H1 (cell line): ENCODE measurements at regions of chr9 and their contacts with region 1.

Region 1: GRCh38 chr9:96317335-96317980 is 15.5 kb upstream of the HSD17B3 start:
- DNase-seq: peak in 1 of 2 experiments; percentile 66
- H3K4me3 ChIP-seq: no peak overlapping the region
- H3K27ac ChIP-seq: no peak overlapping the region
- H3K4me1 ChIP-seq: peaks cover 0 to 10% (median 6%) of the 10 kb centered on the region in 4 experiments; a peak in 4 of 7 replicates
- H3K27me3 ChIP-seq: no peaks in the 10 kb centered on the region
- CTCF ChIP-seq: peak; percentile 58 to 90 (median 69)
- EP300 ChIP-seq: no peak
- POLR2A ChIP-seq: no peak
- RAD21 ChIP-seq: peak; percentile 93

Region 2: DNA sequence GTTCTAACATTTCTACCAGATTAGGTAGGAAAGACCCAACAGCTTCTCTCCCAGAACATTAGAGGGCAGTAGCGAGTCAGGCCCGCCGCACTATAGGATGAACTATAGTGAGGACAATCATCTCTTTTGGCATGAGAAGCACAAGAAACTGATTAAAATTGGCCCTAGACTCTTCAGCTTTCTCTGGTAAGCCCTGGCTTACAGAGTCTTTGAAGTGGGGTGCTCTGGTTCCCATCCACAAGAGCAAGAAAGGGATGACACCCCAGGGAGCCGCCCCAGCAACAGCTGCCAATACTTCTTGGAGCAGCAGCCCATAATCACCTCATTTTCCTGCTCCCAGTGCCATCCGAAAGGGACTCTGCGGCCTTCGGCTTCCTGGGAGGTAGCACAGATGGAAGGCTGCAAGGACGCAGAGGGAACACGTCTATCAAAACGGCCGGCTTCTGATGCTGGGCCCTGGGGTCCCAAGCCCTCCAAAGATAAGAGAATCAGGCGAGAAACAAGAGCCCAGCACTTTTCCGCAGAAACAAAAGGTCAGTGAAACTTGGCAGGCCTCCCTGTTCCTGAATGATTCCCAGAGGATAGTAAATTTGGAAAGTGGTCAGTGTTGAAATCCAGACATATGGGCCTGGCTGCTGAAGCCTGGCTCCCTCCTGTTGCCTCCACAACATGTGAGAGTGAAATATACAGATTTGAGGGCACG is 84.8 kb before region 1 on chr9:
- CTCF ChIA-PET with region 1: interaction called, 91 read pairs
- POLR2A ChIA-PET with region 1: interaction called, 4 read pairs
- DNase-seq: no peak
- H3K4me3 ChIP-seq: no peak overlapping the region
- H3K27ac ChIP-seq: no peak overlapping the region
- H3K4me1 ChIP-seq: no peaks in the 10 kb centered on the region
- H3K27me3 ChIP-seq: no peaks in the 10 kb centered on the region
- CTCF ChIP-seq: peak; percentile 48 to 81 (median 78)
- EP300 ChIP-seq: no peak
- POLR2A ChIP-seq: no peak
- RAD21 ChIP-seq: peak; percentile 71 to 79

Region 3: DNA sequence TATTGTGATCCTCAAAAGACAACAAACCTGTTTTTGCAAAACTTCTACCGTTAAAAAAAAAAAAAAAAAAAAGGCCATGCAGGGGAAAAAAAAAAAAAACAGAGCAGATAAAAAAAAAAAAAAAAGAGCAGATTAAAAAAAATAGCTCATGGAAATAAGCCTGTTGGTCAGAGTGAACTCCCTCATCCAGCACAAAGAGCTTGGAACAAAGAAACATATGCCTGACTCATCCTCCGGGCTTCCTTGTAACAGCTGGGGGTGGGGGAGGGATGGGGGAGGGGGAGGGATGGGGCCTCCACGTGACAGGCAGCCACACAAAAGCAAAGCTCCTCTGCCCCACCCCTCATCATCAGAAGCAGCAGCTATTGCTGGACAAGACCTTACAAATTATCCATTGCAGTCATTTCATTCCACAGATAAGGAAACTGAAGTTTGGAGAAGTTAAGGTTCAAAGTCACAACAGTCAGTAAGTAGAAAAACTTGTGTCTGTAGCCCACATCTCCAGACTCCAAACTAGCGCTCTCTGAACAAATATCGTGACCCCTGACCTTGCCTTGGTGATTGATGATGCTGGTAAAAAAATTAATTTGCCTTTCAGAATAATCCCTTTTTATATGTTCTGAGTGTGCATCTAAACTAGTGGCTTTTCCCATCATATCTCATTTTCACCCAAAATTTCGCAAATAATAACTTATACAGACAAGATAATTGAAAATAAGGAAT is 27.2 kb after region 1 on chr9:
- CTCF ChIA-PET with region 1: no interaction called
- POLR2A ChIA-PET with region 1: no interaction called
- DNase-seq: no peak
- H3K4me3 ChIP-seq: no peak overlapping the region; a peak in 1 of 8 replicates
- H3K27ac ChIP-seq: 0 out of 2 replicates have a peak overlapping the region, but pooled peaks have one; percentile 41
- H3K4me1 ChIP-seq: peaks cover 0 to 33% (median 17%) of the 10 kb centered on the region in 4 experiments; a peak in 6 of 7 replicates
- H3K27me3 ChIP-seq: no peaks in the 10 kb centered on the region
- CTCF ChIP-seq: no peak
- EP300 ChIP-seq: no peak
- POLR2A ChIP-seq: no peak
- RAD21 ChIP-seq: no peak